Mammary epithelial cell (primary cell): ENCODE measurements at regions of chr4 and their contacts with region 1.

Region 1: DNA sequence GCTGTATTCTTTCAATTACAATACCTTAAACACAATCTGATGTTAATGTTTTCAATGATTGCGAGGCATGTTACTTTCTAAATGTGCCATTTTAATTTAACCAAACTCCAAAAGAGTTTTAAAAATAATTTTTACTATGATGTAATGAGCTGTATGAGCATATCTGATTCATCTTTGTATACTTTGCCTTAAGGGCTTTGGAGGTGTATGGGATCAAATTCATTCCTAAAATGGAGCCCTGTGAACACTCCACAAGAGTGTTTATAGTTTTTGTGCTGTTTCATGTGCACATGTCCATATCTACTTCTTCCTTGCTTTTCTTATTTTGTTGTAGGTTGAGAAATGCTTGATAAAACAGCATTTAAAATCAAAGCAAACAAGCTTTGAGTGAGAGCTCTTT is 82.4 kb downstream of the ATP10D start:
- DNase-seq: no peak
- H3K4me3 ChIP-seq: no peak overlapping the region
- H3K27ac ChIP-seq: no peak overlapping the region
- H3K4me1 ChIP-seq: peaks cover 18% of the 10 kb centered on the region
- H3K27me3 ChIP-seq: no peaks in the 10 kb centered on the region
- CTCF ChIP-seq: no peak

Region 2: DNA sequence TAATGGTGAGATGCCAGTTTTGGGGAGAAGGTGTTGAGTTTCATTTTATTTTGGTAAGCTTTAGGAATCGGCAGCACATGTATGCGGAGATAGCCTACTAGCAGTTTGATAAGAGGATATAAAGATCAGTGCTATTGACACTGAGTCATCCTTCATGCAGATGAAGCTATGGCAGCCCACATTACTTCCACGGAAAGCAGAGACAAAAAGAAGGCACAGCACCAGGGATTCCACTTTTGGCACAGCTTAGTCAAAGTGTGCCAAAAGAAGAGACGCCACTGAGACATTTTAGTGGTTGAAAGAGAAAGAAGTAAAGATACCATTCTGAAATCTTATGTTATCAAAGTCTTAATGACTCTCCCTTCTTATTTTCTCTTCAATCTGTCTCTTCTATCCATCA is 432.3 kb before region 1 on chr4:
- CTCF ChIA-PET with region 1: no interaction called
- dilution Hi-C with region 1: no loop called
- in situ Hi-C with region 1: no loop called
- intact Hi-C with region 1: no loop called
- DNase-seq: no peak
- H3K4me3 ChIP-seq: no peak overlapping the region
- H3K27ac ChIP-seq: no peak overlapping the region
- H3K4me1 ChIP-seq: no peaks in the 10 kb centered on the region
- H3K27me3 ChIP-seq: peaks cover 2% of the 10 kb centered on the region
- CTCF ChIP-seq: no peak

Region 3: GRCh38 chr4:47213971-47214370 is 353.5 kb before region 1 on chr4:
- CTCF ChIA-PET with region 1: no interaction called
- dilution Hi-C with region 1: no loop called
- in situ Hi-C with region 1: no loop called
- intact Hi-C with region 1: no loop called
- DNase-seq: peak; percentile 94
- H3K4me3 ChIP-seq: no peak overlapping the region
- H3K27ac ChIP-seq: peak overlapping the region; percentile 68
- H3K4me1 ChIP-seq: peaks cover 19% of the 10 kb centered on the region
- H3K27me3 ChIP-seq: no peaks in the 10 kb centered on the region
- CTCF ChIP-seq: no peak

Region 4: GRCh38 chr4:47519239-47519883 is 48.1 kb before region 1 on chr4:
- CTCF ChIA-PET with region 1: no interaction called
- dilution Hi-C with region 1: loop called (anchors 5 kb)
- in situ Hi-C with region 1: no loop called
- intact Hi-C with region 1: no loop called
- DNase-seq: peak; percentile 73
- H3K4me3 ChIP-seq: no peak overlapping the region
- H3K27ac ChIP-seq: no peak overlapping the region
- H3K4me1 ChIP-seq: peaks cover 8% of the 10 kb centered on the region
- H3K27me3 ChIP-seq: no peaks in the 10 kb centered on the region
- CTCF ChIP-seq: no peak